ENCODE measurements at regions of chr10 and their contacts with region 1.

Region 1: DNA sequence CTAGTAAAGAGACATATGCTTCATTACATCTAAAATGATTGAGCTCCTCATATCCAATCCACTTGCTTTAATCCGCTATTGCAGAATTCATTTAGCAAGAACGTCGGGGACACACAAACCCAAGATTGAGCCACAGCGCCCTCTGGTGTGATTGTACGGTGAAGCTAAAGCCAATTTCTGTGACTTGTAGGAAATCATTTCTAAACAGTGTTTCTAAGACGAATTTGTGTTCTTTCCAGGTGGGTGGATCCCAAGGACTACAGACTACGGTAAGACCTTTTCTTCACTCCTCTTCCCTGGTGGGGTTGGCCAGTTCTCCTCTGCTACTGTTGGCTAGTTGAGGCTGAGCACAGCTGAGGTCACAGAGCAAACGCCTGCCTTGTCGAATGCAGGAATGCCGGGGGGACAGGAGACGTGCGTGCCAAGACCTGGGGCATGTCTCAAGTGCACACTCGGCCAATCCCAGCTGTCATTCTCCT is 5.2 kb downstream of the DMBT1 start:
- DNase-seq: peak; percentile 89
- H3K4me3 ChIP-seq: no peak overlapping the region
- H3K27ac ChIP-seq: no peak overlapping the region
- H3K4me1 ChIP-seq: no peaks in the 10 kb centered on the region
- H3K27me3 ChIP-seq: peaks cover 19% of the 10 kb centered on the region in 2 experiments
- CTCF ChIP-seq: peak; percentile 71 to 76
- POLR2A ChIP-seq: no peak

Region 2: GRCh38 chr10:122279725-122280141 is 286.0 kb before region 1 on chr10:
- CTCF ChIA-PET with region 1: interaction called, 62 read pairs
- POLR2A ChIA-PET with region 1: interaction called, 4 read pairs
- dilution Hi-C with region 1: no loop called
- intact Hi-C with region 1: loop called (anchors 1 kb)
- DNase-seq: peak; percentile 74
- H3K4me3 ChIP-seq: no peak overlapping the region
- H3K27ac ChIP-seq: no peak overlapping the region
- H3K4me1 ChIP-seq: peaks cover 2% of the 10 kb centered on the region
- H3K27me3 ChIP-seq: no peaks in the 10 kb centered on the region
- CTCF ChIP-seq: peak; percentile 77 to 81
- POLR2A ChIP-seq: no peak

Region 3: DNA sequence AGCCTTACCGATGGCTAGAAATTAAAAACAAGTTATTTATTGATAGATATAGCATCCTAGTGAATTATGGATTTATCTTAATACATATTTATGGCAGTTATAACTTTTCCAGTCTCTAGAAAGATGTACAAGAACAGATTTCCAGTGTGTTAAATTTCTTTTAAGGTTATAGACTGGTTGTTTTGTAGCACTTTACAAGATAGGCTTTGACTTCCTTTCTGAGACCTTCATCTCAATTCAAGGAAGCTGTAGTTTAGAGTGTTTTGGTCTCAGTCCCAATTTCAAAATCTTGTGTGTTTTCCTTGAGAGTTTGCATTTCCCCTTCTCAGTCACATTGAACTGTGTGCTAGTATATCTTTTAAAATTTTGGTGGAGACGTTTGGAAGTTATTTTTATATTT is 161.2 kb before region 1 on chr10:
- CTCF ChIA-PET with region 1: interaction called, 12 read pairs
- POLR2A ChIA-PET with region 1: no interaction called
- dilution Hi-C with region 1: no loop called
- intact Hi-C with region 1: no loop called
- DNase-seq: peak; percentile 75
- H3K4me3 ChIP-seq: no peak overlapping the region
- H3K27ac ChIP-seq: no peak overlapping the region
- H3K4me1 ChIP-seq: peaks cover 2% of the 10 kb centered on the region
- H3K27me3 ChIP-seq: no peaks in the 10 kb centered on the region
- CTCF ChIP-seq: no peak
- POLR2A ChIP-seq: no peak

Region 4: DNA sequence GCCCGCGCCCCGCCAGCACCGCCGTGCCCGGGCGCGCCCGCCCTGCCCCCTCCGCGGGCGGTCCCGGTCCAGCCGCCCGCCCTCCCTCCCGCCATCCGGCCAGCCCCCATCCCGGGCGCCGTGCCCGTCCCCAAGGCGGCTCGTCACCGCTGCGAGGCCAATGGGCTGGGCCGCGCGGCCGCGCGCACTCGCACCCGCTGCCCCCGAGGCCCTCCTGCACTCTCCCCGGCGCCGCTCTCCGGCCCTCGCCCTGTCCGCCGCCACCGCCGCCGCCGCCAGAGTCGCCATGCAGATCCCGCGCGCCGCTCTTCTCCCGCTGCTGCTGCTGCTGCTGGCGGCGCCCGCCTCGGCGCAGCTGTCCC is 104.4 kb before region 1 on chr10 and contains the start of gene HTRA1:
- CTCF ChIA-PET with region 1: interaction called, 15 read pairs
- POLR2A ChIA-PET with region 1: no interaction called
- dilution Hi-C with region 1: no loop called
- intact Hi-C with region 1: loop called (anchors 2 kb)
- DNase-seq: peak; percentile 67
- H3K4me3 ChIP-seq: peak within 1 kb of the TSS; percentile 71 to 92 (median 88)
- H3K27ac ChIP-seq: peak within 1 kb of the TSS; percentile 46
- H3K4me1 ChIP-seq: peaks cover 14% of the 10 kb centered on the region
- H3K27me3 ChIP-seq: no peaks in the 10 kb centered on the region
- CTCF ChIP-seq: no peak
- POLR2A ChIP-seq: peak; percentile 58
- total RNA-seq, gene HTRA1: 192 and 255 TPM in 2 replicates

Region 5: GRCh38 chr10:122504610-122504950 is 61.2 kb before region 1 on chr10:
- CTCF ChIA-PET with region 1: interaction called, 36 read pairs
- POLR2A ChIA-PET with region 1: no interaction called
- dilution Hi-C with region 1: no loop called
- intact Hi-C with region 1: no loop called
- DNase-seq: peak; percentile 94
- H3K4me3 ChIP-seq: no peak overlapping the region
- H3K27ac ChIP-seq: peak overlapping the region; percentile 11
- H3K4me1 ChIP-seq: peaks cover 9% of the 10 kb centered on the region
- H3K27me3 ChIP-seq: no peaks in the 10 kb centered on the region
- CTCF ChIP-seq: no peak
- POLR2A ChIP-seq: no peak

Region 6: DNA sequence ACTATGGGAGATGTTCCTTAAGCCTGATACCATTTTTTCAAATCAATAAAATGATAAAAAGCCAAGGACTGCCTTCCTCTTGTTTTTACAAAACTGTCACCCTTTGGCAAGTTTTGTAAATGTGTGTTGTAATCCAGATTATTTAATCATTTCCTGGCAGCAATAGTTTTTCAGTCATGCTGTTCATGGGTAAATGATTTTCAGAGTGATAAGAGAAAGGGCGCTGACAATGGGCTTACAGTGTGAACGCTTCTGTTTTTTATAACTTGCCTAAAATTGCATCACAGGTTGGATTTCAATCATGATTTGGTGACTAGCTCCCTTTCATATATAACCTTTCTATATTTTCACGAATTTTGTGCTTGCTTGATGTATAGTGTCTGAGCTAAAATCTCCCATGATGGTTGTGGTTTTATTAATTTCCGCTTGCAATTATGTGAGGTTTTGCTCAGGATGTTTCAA is 24.2 kb before region 1 on chr10:
- CTCF ChIA-PET with region 1: interaction called, 12 read pairs
- POLR2A ChIA-PET with region 1: no interaction called
- dilution Hi-C with region 1: no loop called
- intact Hi-C with region 1: no loop called
- DNase-seq: peak; percentile 60
- H3K4me3 ChIP-seq: no peak overlapping the region
- H3K27ac ChIP-seq: no peak overlapping the region
- H3K4me1 ChIP-seq: peaks cover 6% of the 10 kb centered on the region
- H3K27me3 ChIP-seq: no peaks in the 10 kb centered on the region
- CTCF ChIP-seq: no peak
- POLR2A ChIP-seq: no peak

Measured in endothelial cell of umbilical vein (primary cell).